ENCODE measurements at regions of chr20 and their contacts with region 1.

Region 1: DNA sequence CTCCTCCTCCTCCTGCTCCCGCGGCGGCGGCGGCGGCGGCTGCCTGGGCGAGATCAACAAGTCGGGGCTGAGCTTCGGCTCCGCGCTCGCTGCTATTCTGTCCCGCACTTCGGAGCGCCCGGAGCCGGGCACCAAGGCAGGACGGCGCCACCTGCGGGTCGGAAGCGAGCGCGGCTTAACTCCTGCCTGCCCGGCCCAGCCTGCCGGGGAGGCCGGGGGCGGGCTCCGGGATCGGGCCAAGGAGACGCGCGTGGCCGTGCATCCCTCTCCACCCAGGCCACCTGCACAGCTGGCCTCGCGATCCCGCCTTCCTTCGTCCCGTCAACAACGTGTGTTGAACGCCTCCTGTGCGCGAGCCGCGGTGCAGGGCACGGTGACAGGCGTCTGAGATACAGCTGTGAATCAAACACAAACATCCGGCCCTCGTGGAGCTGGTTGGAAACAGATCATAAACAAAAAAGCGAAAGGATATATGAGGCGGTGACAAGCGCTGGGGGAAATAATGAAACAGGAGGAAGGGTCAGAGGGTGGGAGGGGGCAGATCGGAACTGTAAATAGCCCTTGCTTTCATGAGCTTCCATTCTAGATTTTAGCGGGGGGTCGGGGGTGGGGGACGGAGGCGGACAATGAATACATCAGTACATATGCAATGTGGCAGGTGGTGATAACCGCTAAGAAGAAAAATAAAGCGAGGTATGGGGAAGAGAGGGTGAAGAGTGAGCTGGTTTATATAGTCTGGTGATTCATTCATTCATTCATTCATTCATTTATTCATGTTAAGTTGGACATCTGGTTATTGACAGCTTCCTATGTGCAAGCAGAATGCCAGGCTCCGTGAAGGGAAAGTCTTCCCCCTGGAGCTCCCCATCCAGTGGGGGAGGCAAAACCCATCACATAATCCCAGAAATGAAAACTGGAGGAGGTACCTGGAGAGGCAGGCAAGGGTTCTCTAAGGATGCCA is 2.0 kb upstream of the KCNB1 start:
- DNase-seq: peak; percentile 83 to 86
- ATAC-seq: peak; percentile 91 to 98
- H3K4me3 ChIP-seq: peak overlapping the region; percentile 51
- H3K27ac ChIP-seq: peak overlapping the region; percentile 48 to 67; a peak in 4 of 6 replicates
- H3K4me1 ChIP-seq: peaks cover 11% of the 10 kb centered on the region; the same call in 2 of the 3 replicates
- CTCF ChIP-seq: peak; percentile 89
- EP300 ChIP-seq: no peak
- POLR2A ChIP-seq: no peak
- RAD21 ChIP-seq: peak; percentile 75 to 92

Region 2: DNA sequence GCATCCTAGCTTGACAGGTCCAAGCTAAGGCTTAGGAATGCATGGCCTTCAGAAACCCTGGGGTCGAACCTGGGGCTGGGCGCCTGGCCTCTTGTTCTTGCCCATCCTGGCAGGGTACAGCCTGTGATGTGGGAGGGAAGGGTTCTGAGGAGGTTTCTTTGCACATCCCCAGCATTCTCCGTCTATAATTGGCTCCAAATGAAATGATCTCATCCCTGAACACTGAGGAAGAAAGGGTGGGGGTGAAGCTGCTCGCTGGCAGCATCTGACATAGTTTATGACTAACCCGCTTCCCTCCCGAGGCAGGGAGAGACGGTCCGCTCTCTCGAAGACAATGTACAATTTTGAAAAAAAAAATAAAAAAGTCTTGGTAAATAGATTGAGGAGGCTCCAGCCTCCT is 139.5 kb before region 1 on chr20:
- CTCF ChIA-PET with region 1: interaction called, 291 read pairs
- POLR2A ChIA-PET with region 1: interaction called, 4 read pairs
- DNase-seq: peak; percentile 83 to 89
- ATAC-seq: peak; percentile 83 to 91
- H3K4me3 ChIP-seq: peak overlapping the region; percentile 33
- H3K27ac ChIP-seq: peak overlapping the region; percentile 85
- H3K4me1 ChIP-seq: peaks cover 50% of the 10 kb centered on the region
- CTCF ChIP-seq: no peak
- EP300 ChIP-seq: no peak
- POLR2A ChIP-seq: no peak
- RAD21 ChIP-seq: no peak

Region 3: GRCh38 chr20:49411221-49411925 is 73.1 kb before region 1 on chr20:
- CTCF ChIA-PET with region 1: interaction called, 28 read pairs
- POLR2A ChIA-PET with region 1: no interaction called
- DNase-seq: no peak
- ATAC-seq: no peak
- H3K4me3 ChIP-seq: no peak overlapping the region
- H3K27ac ChIP-seq: no peak overlapping the region
- H3K4me1 ChIP-seq: no peaks in the 10 kb centered on the region
- CTCF ChIP-seq: no peak
- EP300 ChIP-seq: no peak
- POLR2A ChIP-seq: no peak
- RAD21 ChIP-seq: no peak

Region 4: DNA sequence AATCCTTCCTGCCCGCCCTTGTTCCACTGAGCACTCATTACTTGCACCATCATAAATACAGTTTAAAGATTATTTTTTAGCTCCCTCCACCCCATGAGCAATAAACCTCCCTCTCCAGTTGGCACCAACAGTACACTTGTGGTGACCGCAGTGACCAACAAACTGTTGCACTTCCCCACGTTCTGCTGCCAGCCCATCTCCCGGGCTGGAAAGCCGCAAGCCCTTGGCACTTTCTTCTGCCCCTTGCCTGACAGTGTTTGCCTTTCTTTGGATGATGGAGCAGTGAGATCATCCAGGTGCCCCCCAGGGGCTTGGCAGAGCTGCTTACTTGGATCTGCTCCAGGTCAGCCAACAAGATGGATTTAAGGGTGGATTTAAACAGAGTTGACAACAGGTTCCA is 23.5 kb before region 1 on chr20:
- CTCF ChIA-PET with region 1: interaction called, 21 read pairs
- POLR2A ChIA-PET with region 1: no interaction called
- DNase-seq: no peak
- ATAC-seq: no peak
- H3K4me3 ChIP-seq: no peak overlapping the region
- H3K27ac ChIP-seq: no peak overlapping the region
- H3K4me1 ChIP-seq: 0 out of 3 replicates have a peak, but pooled peaks cover 7% of the 10 kb centered on the region
- CTCF ChIP-seq: no peak
- EP300 ChIP-seq: no peak
- POLR2A ChIP-seq: no peak
- RAD21 ChIP-seq: no peak

Region 5: GRCh38 chr20:49516916-49517789 is 32.7 kb after region 1 on chr20:
- CTCF ChIA-PET with region 1: interaction called, 22 read pairs
- POLR2A ChIA-PET with region 1: no interaction called
- DNase-seq: no peak
- ATAC-seq: peak in 1 of 2 experiments; percentile 48; a peak in 3 of 6 replicates
- H3K4me3 ChIP-seq: no peak overlapping the region
- H3K27ac ChIP-seq: no peak overlapping the region
- H3K4me1 ChIP-seq: peaks cover 7% of the 10 kb centered on the region; the same call in 1 of the 3 replicates
- CTCF ChIP-seq: no peak
- EP300 ChIP-seq: no peak
- POLR2A ChIP-seq: no peak
- RAD21 ChIP-seq: no peak

Region 6: DNA sequence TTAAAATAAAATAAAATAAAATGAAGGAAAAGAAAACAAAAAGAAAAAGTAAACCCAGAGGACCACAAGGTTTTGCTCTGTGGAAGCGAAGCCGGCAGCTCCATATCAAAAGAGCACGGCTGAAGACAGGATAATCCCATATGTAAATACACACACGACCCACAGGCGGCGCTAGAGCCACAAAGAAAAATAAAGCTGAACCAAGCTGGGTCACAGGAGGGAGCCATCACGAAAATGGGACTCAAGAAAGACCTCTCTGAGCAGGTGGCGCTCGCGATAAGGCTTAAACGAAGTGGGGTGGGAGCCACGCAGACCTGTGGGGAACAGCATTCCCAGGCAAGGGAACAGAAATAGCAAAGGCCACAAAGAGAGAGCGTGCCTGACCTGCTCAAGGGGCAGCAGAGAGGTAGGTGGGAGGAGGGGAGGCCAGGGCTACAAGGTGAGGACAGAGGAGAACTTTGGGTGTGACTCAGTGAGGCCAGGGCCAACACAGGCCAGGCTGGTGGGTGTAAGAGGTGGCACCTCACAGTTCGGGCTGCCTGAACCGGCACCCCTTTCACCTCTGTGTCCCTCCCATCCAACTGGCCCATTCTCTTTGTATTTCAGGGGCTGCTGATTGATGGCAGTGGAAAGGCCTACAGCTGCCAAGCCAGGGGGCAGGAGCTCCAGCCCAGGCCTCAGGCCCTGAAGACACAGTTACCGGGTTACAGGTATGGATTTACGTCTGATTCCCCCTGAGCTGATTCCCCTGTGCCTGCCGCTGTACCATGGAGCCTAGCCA is 57.5 kb after region 1 on chr20:
- CTCF ChIA-PET with region 1: interaction called, 44 read pairs
- POLR2A ChIA-PET with region 1: no interaction called
- DNase-seq: peak; percentile 81 to 87
- ATAC-seq: peak; percentile 73 to 87
- H3K4me3 ChIP-seq: no peak overlapping the region
- H3K27ac ChIP-seq: peak overlapping the region; percentile 48 to 61; a peak in 5 of 6 replicates
- H3K4me1 ChIP-seq: 0 out of 3 replicates have a peak, but pooled peaks cover 5% of the 10 kb centered on the region
- CTCF ChIP-seq: peak; percentile 98
- EP300 ChIP-seq: no peak
- POLR2A ChIP-seq: no peak
- RAD21 ChIP-seq: peak; percentile 98

Region 7: GRCh38 chr20:49595811-49596561 is 111.5 kb after region 1 on chr20:
- CTCF ChIA-PET with region 1: no interaction called
- POLR2A ChIA-PET with region 1: no interaction called
- DNase-seq: no peak
- ATAC-seq: peak; percentile 16 to 18; a peak in 3 of 6 replicates
- H3K4me3 ChIP-seq: no peak overlapping the region
- H3K27ac ChIP-seq: peak overlapping the region; percentile 53 to 78
- H3K4me1 ChIP-seq: peaks cover 36% of the 10 kb centered on the region
- CTCF ChIP-seq: no peak
- EP300 ChIP-seq: no peak
- POLR2A ChIP-seq: no peak
- RAD21 ChIP-seq: no peak

Measured in A549 (cell line).